ENCODE measurements at regions of chr10 and their contacts with region 1.

Region 1: DNA sequence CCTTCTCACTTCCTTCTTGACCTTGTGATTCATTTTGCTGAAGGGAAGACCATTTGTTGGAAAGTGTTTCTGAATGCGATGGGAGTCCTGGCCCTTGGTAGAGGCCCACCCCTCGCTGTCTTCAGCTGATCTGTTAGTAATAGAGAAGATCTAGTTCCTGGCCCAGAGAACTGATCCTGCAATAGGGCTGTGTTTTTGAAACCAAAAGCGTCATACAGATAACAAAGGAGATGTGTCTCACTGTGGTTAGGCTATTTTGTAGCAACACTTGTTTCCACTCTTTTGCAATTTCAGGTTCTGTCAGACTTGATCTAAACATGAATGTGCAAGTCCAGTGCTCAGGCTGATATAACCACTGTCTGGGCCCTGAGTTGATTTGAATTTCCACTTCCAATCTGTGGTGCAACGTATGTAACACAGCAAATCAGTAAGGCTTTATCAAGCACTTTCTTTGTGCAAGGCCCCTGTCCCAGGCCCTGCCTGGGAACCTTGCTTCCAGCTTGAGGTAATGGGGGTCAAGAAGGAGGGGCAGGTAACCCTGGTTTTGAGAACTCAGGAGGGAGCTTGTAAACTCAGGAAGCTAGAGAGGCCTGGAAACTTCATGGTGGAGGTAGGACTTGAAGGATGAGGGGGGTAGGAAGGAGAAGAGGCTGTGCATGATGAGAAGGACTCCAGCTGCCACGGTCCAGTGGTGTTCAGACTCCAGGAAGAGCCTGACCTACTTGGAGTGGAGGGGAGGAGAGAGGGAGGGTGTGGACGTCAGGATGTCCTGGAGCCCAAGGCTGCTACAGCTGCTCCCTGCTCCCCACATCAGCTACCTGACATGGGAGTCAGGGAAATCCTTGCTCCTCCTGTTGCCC is 42.2 kb upstream of the SRGN start:
- DNase-seq: peak; percentile 68
- ATAC-seq: peak; percentile 76
- H3K4me3 Mint-ChIP-seq: peak overlapping the region; percentile 58
- H3K27ac Mint-ChIP-seq: peak overlapping the region; percentile 98
- H3K4me1 Mint-ChIP-seq: peaks cover 57% of the 10 kb centered on the region
- H3K27me3 Mint-ChIP-seq: no peaks in the 10 kb centered on the region

Region 2: GRCh38 chr10:69004821-69005220 is 40.9 kb before region 1 on chr10:
- CTCF ChIA-PET with region 1: interaction called, 23 read pairs
- DNase-seq: no peak
- ATAC-seq: peak; percentile 61
- H3K4me3 Mint-ChIP-seq: no peak overlapping the region
- H3K27ac Mint-ChIP-seq: no peak overlapping the region
- H3K4me1 Mint-ChIP-seq: peaks cover 8% of the 10 kb centered on the region
- H3K27me3 Mint-ChIP-seq: no peaks in the 10 kb centered on the region

Region 3: DNA sequence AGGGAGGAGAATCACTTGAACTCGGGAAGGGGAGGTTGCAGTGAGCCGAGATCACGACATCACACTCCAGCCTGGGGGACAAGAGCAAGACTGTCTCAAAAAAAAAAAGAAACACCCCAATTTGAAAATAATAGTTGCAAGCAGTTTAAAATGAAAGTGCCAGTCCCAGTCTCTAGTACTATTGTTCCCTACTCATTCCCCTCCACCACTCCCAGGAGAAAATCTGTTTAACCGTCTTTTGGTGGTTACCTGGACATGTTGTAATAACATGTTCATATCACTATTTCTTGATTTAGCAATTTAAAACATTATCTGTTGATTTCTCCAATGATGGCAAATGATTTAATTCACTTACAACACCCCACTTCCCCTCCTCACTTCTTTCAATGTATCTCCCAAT is 12.4 kb before region 1 on chr10:
- CTCF ChIA-PET with region 1: interaction called, 14 read pairs
- DNase-seq: no peak
- ATAC-seq: no peak
- H3K4me3 Mint-ChIP-seq: no peak overlapping the region
- H3K27ac Mint-ChIP-seq: no peak overlapping the region
- H3K4me1 Mint-ChIP-seq: peaks cover 4% of the 10 kb centered on the region
- H3K27me3 Mint-ChIP-seq: no peaks in the 10 kb centered on the region

Region 4: GRCh38 chr10:69057261-69057950 is 11.7 kb after region 1 on chr10:
- CTCF ChIA-PET with region 1: interaction called, 24 read pairs
- DNase-seq: peak; percentile 79
- ATAC-seq: peak; percentile 56
- H3K4me3 Mint-ChIP-seq: peak overlapping the region; percentile 19
- H3K27ac Mint-ChIP-seq: peak overlapping the region; percentile 87
- H3K4me1 Mint-ChIP-seq: peaks cover 67% of the 10 kb centered on the region
- H3K27me3 Mint-ChIP-seq: no peaks in the 10 kb centered on the region

Region 5: DNA sequence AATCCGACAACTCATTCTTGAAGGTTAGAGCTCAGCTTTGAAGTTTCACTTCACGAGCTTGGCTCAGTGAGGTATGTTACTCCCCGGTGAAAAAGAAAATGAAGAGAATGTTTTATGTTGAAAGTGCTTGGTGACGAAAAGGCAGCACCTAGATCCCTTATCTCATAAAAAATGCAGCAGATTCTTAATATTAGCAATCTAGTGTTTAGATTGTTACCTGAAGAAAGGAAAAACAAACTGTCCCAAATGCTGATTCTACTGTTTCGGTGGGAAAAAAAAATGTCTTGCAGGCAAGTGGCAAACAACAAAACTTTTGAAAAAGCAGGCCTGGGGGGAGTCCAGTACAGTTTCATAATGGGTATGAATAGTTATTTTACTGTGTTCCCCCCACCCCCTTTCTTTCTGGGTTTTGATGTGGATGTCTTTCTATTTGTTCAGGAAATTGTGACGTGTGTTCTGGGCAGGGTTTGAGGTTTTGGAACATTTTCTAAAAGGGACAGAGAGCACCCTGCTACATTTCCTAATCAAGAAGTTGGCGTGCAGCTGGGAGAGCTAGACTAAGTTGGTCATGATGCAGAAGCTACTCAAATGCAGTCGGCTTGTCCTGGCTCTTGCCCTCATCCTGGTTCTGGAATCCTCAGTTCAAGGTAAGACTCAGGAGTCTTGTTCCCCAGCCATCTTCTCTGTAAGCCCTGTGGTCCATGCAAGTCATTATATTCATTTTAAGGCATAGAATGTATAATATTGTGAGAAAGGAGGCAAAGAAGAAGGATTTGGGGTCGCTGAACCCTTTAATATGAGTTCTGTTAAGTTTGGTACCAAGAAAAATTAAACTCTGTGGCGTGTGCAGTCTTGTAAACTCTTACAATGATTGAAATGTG is 42.2 kb after region 1 on chr10 and contains the start of gene SRGN:
- CTCF ChIA-PET with region 1: interaction called, 13 read pairs
- DNase-seq: peak; percentile 92
- ATAC-seq: peak; percentile 54
- H3K4me3 Mint-ChIP-seq: peak within 1 kb of the TSS; percentile 88
- H3K27ac Mint-ChIP-seq: peak within 1 kb of the TSS; percentile 99
- H3K4me1 Mint-ChIP-seq: peaks cover 52% of the 10 kb centered on the region
- H3K27me3 Mint-ChIP-seq: no peaks in the 10 kb centered on the region
- total RNA-seq, gene SRGN: 366 to 616 TPM

Region 6: DNA sequence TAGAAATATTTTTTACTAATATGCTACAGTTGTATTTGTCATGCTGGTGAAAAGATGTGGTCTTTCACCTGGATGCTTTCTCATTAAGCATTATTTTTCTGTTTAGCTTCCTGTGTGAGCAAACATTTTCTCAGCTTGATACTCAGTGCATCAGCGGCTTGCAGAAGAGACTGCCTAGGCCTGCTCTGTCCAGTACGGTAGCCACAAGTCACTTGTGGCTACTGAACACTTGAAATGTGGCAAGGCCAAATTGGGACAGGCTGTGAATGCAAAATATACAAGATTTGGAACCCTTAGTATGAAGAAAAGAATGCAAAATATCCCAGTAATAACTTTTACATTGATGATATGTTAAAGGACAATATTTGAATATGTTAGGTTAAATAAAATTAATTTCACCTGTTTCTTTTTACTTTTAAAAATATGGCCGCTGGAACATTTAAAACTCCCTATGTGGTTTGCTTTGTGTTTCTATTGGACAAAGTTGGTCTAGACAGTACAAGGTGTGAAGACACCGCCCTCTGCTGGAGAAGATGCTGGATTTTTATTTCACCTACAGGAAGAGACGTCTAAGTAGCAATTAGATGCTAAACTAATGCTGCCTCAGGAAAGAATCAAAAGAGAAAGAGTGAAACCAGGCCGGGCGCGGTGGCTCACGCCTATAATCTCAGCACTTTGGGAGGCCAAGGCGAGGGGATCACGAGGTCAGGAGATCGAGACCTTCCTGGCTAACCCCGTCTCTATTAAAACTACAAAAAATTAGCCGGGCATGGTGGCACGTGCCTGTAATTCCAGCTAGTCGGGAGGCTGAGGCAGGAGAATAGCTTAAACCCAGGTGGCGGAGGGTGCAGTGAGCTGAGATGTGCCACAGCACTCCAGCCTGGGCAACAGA is 47.5 kb after region 1 on chr10:
- CTCF ChIA-PET with region 1: interaction called, 13 read pairs
- DNase-seq: peak; percentile 93
- ATAC-seq: peak; percentile 32
- H3K4me3 Mint-ChIP-seq: peak overlapping the region; percentile 39
- H3K27ac Mint-ChIP-seq: peak overlapping the region; percentile 99
- H3K4me1 Mint-ChIP-seq: peaks cover 68% of the 10 kb centered on the region
- H3K27me3 Mint-ChIP-seq: no peaks in the 10 kb centered on the region

Measured in activated CD8-positive, alpha-beta memory T cell treated with anti-CD3 and anti-CD28 coated beads, Interleukin-2, amount 10 ng/mL, durations not matched to agents 7 days and 5 days (primary cell).